Endothelial cell of umbilical vein (primary cell): ENCODE measurements at regions of chr15 and their contacts with region 1.

Region 1: DNA sequence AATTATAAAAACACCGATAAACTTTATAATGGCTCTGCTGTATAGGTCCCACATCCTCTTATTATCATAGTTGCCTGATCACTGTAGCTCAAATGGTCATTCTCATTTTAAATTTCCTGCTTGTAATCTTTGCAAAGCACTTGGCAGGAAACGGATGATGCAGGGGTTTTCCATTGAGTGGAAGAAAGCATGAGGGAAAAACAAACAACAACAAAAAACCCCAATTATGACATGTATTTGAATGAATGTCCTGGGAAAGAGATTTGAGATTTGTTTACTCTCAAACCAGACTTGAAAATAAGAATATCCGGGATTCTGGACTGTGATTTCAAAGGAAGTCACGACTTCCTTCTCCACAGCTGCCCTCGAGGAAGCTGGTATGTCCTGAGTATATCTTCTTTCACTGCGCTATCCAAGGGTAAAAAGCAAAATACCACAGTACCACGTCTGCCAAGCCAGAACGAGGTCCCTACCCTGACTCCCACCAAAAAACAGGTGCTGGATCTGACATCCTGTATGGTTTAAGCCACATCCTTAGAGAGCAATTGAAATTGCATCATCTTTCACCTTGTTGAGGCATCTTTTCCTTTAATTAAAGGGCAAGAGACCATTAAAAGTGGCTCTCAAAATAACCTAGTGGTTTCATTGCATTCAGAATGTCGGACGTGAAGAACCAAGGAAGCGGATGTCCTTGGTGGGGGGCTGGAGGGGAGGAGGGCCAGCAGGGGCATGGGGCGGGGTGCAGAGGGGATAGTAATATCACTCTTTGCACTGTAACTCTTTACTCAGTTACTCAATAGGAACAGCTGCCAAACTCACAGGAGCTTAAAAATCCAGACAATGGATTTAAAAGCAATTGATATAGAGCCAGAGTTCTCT is 13.5 kb upstream of the TIPIN start:
- DNase-seq: peak; percentile 92
- H3K4me3 ChIP-seq: peak overlapping the region; percentile 22 to 70 (median 41)
- H3K27ac ChIP-seq: peak overlapping the region; percentile 100
- H3K4me1 ChIP-seq: peaks cover 17% of the 10 kb centered on the region
- H3K27me3 ChIP-seq: no peaks in the 10 kb centered on the region
- CTCF ChIP-seq: no peak
- POLR2A ChIP-seq: peak; percentile 32

Region 2: DNA sequence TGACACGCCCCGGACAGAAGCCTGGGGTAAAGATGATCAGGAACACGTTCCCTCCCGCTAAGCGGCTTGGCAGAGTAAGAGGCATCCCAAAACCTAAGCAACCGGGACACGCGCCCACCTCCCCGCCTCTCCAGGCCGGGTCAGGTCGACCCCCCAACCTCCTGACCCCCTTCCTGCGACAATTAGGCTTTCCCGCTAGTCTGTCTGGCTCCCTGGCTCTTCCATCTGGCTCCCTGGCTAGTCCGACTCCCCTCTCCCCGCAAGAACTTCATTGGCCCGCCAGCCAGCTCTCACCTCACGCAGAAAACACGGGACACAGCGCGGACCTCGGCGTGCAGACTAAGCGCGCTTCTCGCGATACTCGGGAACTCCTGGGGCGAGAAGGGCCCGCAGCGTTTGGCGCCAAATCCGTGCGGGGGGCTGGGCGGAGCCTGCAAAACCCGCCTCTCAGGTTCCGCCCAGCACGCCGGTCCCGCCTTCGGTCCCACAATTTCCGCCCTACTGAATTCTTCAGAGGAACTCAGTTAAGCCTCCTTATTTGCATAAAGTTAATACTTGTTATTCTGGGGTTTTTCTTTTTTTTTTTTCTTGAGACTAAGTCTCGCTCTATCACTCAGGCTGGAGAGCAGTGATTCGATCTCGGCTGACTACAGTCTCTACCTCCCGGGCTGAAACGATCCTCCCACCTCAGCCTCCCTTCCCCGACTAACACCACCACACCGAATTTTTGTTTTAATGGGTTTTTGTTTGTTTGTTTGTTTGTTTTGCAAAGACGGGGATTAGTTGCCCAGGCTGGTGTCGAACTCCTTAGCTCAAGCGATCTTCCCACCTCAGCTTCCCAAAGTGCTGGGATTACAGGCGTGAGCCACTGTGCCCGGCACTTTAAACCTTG is 13.4 kb before region 1 on chr15 and contains the start of gene TIPIN:
- CTCF ChIA-PET with region 1: interaction called, 4 read pairs
- POLR2A ChIA-PET with region 1: interaction called, 4 read pairs
- dilution Hi-C with region 1: no loop called
- intact Hi-C with region 1: loop called (anchors 1 kb)
- DNase-seq: peak; percentile 97
- H3K4me3 ChIP-seq: peak within 1 kb of the TSS; percentile 33 to 82 (median 65)
- H3K27ac ChIP-seq: peak within 1 kb of the TSS; percentile 58
- H3K4me1 ChIP-seq: peaks cover 6% of the 10 kb centered on the region
- H3K27me3 ChIP-seq: no peaks in the 10 kb centered on the region
- CTCF ChIP-seq: no peak
- POLR2A ChIP-seq: peak; percentile 81
- total RNA-seq, gene TIPIN: 15.4 and 16.2 TPM in 2 replicates